ENCODE measurements at regions of chr1 and their contacts with region 1.

Region 1: GRCh38 chr1:234544087-234544579 is 65.2 kb upstream of the TARBP1 start:
- H3K4me3 ChIP-seq: no peak overlapping the region
- H3K27ac ChIP-seq: peak overlapping the region; percentile 87
- H3K4me1 ChIP-seq: peaks cover 23% of the 10 kb centered on the region
- CTCF ChIP-seq: no peak

Region 2: GRCh38 chr1:234564642-234565037 is 20.5 kb after region 1 on chr1:
- CTCF ChIA-PET with region 1: no interaction called
- POLR2A ChIA-PET with region 1: interaction called, 12 read pairs
- H3K4me3 ChIP-seq: no peak overlapping the region
- H3K27ac ChIP-seq: no peak overlapping the region
- H3K4me1 ChIP-seq: peaks cover 14% of the 10 kb centered on the region
- CTCF ChIP-seq: no peak

Region 3: DNA sequence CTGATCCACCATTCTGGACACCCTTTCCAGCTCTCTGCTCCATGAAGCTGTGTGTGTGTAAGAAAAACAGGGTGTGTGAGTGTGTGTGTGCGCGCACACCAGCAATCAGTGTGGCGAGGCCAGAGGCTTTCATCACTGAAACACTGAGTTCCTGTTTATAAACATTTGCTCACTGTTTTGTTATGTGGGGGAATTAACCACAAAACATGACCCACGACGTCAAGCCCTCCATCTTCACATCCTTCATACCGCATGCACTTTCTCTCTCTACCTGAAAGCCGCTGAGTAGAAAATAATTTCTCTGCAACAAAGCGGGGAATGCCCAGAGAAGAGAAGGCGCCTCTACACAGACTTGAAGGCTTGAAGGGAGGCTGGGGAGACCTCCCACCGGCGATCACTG is 214.7 kb after region 1 on chr1:
- CTCF ChIA-PET with region 1: no interaction called
- POLR2A ChIA-PET with region 1: no interaction called
- H3K4me3 ChIP-seq: no peak overlapping the region
- H3K27ac ChIP-seq: no peak overlapping the region
- H3K4me1 ChIP-seq: peaks cover 7% of the 10 kb centered on the region; the same call in 1 of the 2 replicates
- CTCF ChIP-seq: no peak

Region 4: GRCh38 chr1:234893725-234894630 is 349.8 kb after region 1 on chr1:
- CTCF ChIA-PET with region 1: no interaction called
- POLR2A ChIA-PET with region 1: no interaction called
- H3K4me3 ChIP-seq: no peak overlapping the region
- H3K27ac ChIP-seq: no peak overlapping the region
- H3K4me1 ChIP-seq: 0 out of 2 replicates have a peak, but pooled peaks cover under 1% of the 10 kb centered on the region
- CTCF ChIP-seq: no peak

Measured in HEK293 (cell line).